ENCODE measurements at regions of chr4 and their contacts with region 1.

Region 1: DNA sequence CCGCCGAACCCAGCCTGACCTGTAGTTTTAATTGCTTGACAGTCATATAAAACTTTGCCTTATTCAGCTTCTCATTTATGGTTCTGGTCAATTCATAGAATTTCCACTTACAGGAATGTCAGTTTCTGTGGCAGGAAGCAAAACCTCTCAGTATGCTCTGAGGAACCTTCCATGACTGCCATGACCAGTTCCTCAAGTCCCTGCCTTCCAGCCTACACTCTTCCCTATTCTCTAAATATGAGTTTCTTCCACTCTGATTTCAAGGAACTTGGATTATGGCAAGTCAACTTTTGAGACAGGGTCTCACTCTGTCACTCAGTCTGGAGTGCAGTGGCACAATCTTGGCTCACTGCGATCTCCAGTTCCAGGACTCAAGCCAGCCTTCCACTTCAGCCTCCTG is 26.0 kb upstream of the NSUN7 start:
- DNase-seq: no peak
- CTCF ChIP-seq: no peak

Region 2: GRCh38 chr4:40157436-40157835 is 566.3 kb before region 1 on chr4:
- CTCF ChIA-PET with region 1: no interaction called
- POLR2A ChIA-PET with region 1: no interaction called
- DNase-seq: no peak
- CTCF ChIP-seq: no peak

Region 3: DNA sequence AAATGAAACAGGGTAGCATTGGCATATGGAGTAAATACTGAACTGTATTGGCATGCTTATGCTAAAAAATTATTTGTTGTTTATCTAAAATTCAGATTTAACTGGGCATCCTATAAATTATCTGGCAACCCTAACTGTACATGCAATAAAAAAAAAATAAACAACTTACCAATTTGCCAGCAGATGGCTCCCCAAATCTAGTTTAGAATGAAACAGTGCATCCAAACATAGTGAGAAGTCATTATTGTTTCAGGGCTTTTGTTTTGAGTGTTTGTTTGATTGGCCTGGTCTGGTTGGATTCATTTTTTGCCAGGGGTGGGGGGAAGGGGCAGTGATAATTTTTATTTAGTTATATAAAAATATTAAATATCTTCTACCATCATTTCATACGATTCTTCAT is 13.2 kb after region 1 on chr4:
- CTCF ChIA-PET with region 1: interaction called, 10 read pairs
- POLR2A ChIA-PET with region 1: no interaction called
- DNase-seq: peak; percentile 55
- CTCF ChIP-seq: peak; percentile 37